B cell (primary cell): ENCODE measurements at regions of chr6 and their contacts with region 1.

Region 1: DNA sequence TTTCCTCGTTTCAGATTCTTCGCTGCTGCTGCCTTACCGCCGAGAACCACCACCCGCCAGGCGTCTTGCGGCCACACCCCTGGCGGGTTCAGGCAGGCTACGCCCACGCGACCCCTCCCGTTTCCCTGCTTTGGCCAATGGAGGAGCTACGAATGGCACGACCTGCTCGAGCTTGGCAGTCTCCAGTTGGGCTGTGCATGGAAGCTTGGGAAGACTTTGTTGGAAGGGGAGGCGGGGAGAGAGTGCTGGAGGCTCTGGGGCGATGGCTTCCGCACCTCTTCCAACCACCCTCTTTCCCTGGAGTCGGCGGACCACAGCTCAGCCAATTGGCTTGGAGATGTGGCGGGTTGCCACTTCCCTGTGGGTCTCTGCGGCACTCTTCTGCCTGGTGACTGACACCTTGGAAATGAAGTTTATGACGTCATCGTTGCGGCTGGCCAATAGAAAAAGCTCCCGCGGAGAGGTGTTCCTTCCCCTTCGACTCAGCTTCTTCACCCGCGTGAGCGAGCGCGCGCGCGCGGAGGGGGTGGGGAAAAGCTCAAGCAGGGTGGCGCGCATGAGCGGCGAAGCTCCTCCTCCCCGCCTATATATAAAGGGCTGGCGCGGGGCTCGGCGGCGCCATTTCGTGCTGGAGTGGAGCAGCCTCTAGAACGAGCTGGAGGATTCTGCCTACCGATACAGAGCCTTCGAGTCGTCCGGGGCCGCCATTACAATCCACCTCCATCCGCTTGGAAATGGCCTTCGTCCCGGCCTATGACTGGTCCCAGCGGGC is 3.4 kb downstream of the BRD2 start:
- DNase-seq: peak; percentile 100
- ATAC-seq: peak; percentile 50
- H3K4me3 ChIP-seq: peak overlapping the region; percentile 88 to 100 (median 96)
- H3K4me3 Mint-ChIP-seq: peak overlapping the region; percentile 96
- H3K27ac ChIP-seq: peak overlapping the region; percentile 96
- H3K27ac Mint-ChIP-seq: peak overlapping the region; percentile 99
- H3K4me1 ChIP-seq: peaks cover 32 to 43% of the 10 kb centered on the region in 2 donors
- H3K4me1 Mint-ChIP-seq: peaks cover 40% of the 10 kb centered on the region
- H3K27me3 ChIP-seq: no peaks in the 10 kb centered on the region
- H3K27me3 Mint-ChIP-seq: no peaks in the 10 kb centered on the region
- CTCF ChIP-seq: no peak

Region 2: GRCh38 chr6:32177788-32178546 is 793.8 kb before region 1 on chr6 and contains the start of gene RNF5:
- CTCF ChIA-PET with region 1: no interaction called
- POLR2A ChIA-PET with region 1: interaction called, 4 read pairs
- intact Hi-C with region 1: loop called (anchors 5 kb)
- DNase-seq: peak; percentile 99
- ATAC-seq: peak; percentile 79
- H3K4me3 ChIP-seq: peak within 1 kb of the TSS; percentile 68 to 92 (median 75)
- H3K4me3 Mint-ChIP-seq: peak within 1 kb of the TSS; percentile 97
- H3K27ac ChIP-seq: peak within 1 kb of the TSS; percentile 97 to 98
- H3K27ac Mint-ChIP-seq: peak within 1 kb of the TSS; percentile 99
- H3K4me1 ChIP-seq: peaks cover 34 to 47% of the 10 kb centered on the region in 2 donors
- H3K4me1 Mint-ChIP-seq: peaks cover 68% of the 10 kb centered on the region
- H3K27me3 ChIP-seq: no peaks in the 10 kb centered on the region
- H3K27me3 Mint-ChIP-seq: no peaks in the 10 kb centered on the region
- CTCF ChIP-seq: no peak
- total RNA-seq, gene RNF5: 39.0 and 40.7 TPM in 2 replicates

Region 3: GRCh38 chr6:32838114-32838958 is 133.4 kb before region 1 on chr6 and contains the start of gene TAP2:
- CTCF ChIA-PET with region 1: interaction called, 22 read pairs
- POLR2A ChIA-PET with region 1: interaction called, 36 read pairs
- intact Hi-C with region 1: no loop called
- DNase-seq: peak; percentile 97
- ATAC-seq: peak; percentile 84
- H3K4me3 ChIP-seq: peak within 1 kb of the TSS; percentile 71 to 80 (median 76)
- H3K4me3 Mint-ChIP-seq: peak within 1 kb of the TSS; percentile 97
- H3K27ac ChIP-seq: peak within 1 kb of the TSS; percentile 83 to 97
- H3K27ac Mint-ChIP-seq: peak within 1 kb of the TSS; percentile 99
- H3K4me1 ChIP-seq: peaks cover 59 to 73% of the 10 kb centered on the region in 2 donors
- H3K4me1 Mint-ChIP-seq: peaks cover 92% of the 10 kb centered on the region
- H3K27me3 ChIP-seq: no peaks in the 10 kb centered on the region
- H3K27me3 Mint-ChIP-seq: no peaks in the 10 kb centered on the region
- CTCF ChIP-seq: peak; percentile 90
- total RNA-seq, gene TAP2: 126 and 135 TPM in 2 replicates

Region 4: DNA sequence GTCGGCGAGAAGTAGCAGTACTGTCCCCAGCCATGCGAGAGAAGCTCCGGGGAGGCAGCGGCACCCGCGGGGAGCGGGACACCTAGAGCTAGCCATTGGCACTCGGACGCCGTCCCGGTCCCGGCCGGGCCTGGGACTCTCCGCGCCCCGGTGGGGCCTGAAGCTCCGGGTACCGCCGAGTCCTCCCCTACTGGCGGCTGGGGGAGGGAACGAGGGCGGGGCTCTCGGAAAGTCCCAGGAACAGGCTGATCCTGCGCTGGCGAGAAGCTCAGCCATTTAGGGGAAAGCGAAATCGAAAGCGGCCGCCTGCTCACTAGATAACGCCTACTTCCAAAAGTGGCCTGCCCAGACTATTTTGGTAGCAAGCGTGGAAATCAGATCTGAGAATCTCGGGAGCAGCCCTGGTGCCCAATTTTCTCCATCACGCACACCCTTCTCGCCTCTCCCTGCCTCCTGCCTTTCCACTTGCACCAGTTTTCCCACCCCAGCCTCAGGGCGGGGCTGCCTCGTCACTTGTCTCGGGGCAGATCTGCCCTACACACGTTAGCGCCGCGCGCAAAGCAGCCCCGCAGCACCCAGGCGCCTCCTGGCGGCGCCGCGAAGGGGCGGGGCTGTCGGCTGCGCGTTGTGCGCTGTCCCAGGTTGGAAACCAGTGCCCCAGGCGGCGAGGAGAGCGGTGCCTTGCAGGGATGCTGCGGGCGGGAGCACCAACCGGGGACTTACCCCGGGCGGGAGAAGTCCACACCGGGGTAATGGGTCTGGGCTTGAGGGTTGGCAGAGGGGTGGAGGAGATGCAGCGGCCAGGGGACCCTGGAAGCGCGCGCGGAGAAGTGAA is 118.0 kb before region 1 on chr6 and contains the starts of genes PSMB9 and TAP1:
- CTCF ChIA-PET with region 1: interaction called, 7 read pairs
- POLR2A ChIA-PET with region 1: interaction called, 47 read pairs
- intact Hi-C with region 1: no loop called
- DNase-seq: peak; percentile 98
- ATAC-seq: peak; percentile 82
- H3K4me3 ChIP-seq: peak within 1 kb of the TSS; percentile 91 to 98 (median 94)
- H3K4me3 Mint-ChIP-seq: peak within 1 kb of the TSS; percentile 99
- H3K27ac ChIP-seq: peak within 1 kb of the TSS; percentile 98 to 99
- H3K27ac Mint-ChIP-seq: peak within 1 kb of the TSS; percentile 100
- H3K4me1 ChIP-seq: peaks cover 60 to 63% of the 10 kb centered on the region in 2 donors
- H3K4me1 Mint-ChIP-seq: peaks cover 75% of the 10 kb centered on the region
- H3K27me3 ChIP-seq: no peaks in the 10 kb centered on the region
- H3K27me3 Mint-ChIP-seq: no peaks in the 10 kb centered on the region
- CTCF ChIP-seq: peak; percentile 81
- total RNA-seq, gene PSMB9: 174 and 181 TPM in 2 replicates
- total RNA-seq, gene TAP1: 126 and 131 TPM in 2 replicates

Region 5: DNA sequence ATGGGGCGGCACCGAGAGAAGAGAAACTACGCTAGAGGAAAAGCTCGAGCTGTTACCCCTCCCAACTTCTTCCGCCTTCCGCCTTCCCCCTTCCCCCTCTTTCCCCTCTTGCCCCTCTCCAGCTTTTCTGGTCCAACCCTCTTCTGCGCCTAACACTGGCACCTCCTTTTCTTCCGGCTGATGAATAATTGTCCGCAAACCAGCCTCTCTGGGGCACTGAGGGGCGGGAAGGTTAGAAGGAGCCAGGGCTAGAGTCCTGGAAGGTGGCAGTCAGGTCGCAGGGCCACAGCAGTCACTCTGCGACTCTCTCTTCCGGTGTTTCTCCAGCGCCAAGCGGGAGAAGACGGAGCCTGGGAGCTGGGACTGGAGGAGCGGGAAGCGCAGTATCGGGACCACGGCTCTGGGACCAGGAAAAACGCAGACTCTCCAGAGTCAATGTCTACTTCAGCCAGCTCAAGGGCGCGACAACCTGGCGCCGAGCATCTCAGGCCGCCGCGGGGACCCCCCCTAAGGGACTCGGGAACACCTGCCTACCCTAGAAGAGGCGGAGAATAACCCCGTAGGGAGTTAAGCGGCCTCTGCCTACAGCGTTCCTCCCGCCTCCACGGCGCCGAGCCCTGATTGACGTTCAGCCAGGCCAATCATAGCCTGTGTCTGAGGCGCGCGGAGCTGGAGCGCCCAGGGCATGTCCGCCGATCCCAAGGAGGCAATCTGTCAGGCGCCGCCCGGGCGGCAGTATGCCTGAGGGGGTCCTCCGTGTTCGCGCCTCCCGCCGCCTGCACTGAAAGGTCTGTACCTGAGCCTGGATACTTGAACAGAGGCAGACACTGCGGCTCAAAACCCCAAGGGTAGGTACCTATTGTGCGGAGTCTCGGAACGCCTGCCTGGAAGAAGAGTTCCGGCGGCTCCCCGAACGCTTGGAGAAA is 77.4 kb before region 1 on chr6:
- CTCF ChIA-PET with region 1: interaction called, 15 read pairs
- POLR2A ChIA-PET with region 1: interaction called, 64 read pairs
- intact Hi-C with region 1: loop called (anchors 1 kb)
- DNase-seq: peak; percentile 98
- ATAC-seq: peak; percentile 98
- H3K4me3 ChIP-seq: peak overlapping the region; percentile 84 to 96 (median 92)
- H3K4me3 Mint-ChIP-seq: peak overlapping the region; percentile 99
- H3K27ac ChIP-seq: peak overlapping the region; percentile 89 to 90
- H3K27ac Mint-ChIP-seq: peak overlapping the region; percentile 98
- H3K4me1 ChIP-seq: peaks cover 40 to 42% of the 10 kb centered on the region in 2 donors
- H3K4me1 Mint-ChIP-seq: peaks cover 60% of the 10 kb centered on the region
- H3K27me3 ChIP-seq: no peaks in the 10 kb centered on the region
- H3K27me3 Mint-ChIP-seq: no peaks in the 10 kb centered on the region
- CTCF ChIP-seq: no peak

Region 6: GRCh38 chr6:32947552-32948465 is 24.0 kb before region 1 on chr6:
- CTCF ChIA-PET with region 1: interaction called, 822 read pairs
- POLR2A ChIA-PET with region 1: interaction called, 349 read pairs
- intact Hi-C with region 1: loop called (anchors 1 kb)
- DNase-seq: peak; percentile 76
- ATAC-seq: no peak
- H3K4me3 ChIP-seq: peak overlapping the region in 3 of 5 experiments; percentile 2 to 35 (median 6)
- H3K4me3 Mint-ChIP-seq: peak overlapping the region; percentile 84
- H3K27ac ChIP-seq: peak overlapping the region; percentile 97 to 98
- H3K27ac Mint-ChIP-seq: peak overlapping the region; percentile 92
- H3K4me1 ChIP-seq: peaks cover 80 to 94% of the 10 kb centered on the region in 2 donors
- H3K4me1 Mint-ChIP-seq: peaks cover 86% of the 10 kb centered on the region
- H3K27me3 ChIP-seq: no peaks in the 10 kb centered on the region
- H3K27me3 Mint-ChIP-seq: no peaks in the 10 kb centered on the region
- CTCF ChIP-seq: peak; percentile 70

Region 7: DNA sequence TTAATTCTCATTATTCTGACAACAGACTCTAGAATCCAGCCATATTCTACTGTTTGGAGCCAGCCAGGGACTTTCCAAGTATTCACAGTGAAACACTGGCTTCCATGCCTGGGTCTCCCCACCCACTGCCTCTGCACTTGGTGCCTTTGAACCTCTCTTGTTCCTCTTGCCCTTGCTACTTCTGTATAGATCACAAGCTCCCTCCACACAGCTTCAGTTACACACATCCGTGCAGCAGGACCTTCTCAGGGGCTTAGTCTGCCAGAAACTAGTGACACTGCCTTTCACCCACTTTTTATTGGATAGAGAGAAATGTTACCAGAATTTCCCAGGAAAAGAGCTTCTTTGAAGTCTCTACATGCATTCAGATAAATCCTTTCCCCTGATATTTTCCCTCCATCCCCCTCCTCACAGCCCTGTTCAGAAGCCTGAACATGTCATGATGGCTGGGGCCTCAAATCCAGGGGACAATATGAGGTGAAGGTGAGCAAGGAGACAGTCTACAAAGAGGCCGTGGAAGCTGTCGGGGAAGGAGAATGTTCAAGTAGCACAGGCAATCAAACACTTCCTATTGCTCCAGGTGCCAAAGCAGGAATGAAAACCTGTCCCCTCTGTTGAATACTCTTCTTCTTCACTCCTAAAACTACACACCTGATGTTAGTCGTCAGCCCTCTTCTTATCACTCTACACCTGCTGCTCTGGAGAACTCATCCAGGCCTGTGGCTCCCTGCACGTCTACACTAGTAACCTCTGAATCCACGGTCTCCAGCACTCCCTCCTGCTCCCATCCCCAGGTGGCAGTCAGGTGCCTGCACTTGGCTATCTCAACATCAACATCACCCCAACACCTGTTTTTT is 57.8 kb after region 1 on chr6:
- CTCF ChIA-PET with region 1: no interaction called
- POLR2A ChIA-PET with region 1: interaction called, 6 read pairs
- intact Hi-C with region 1: loop called (anchors 5 kb)
- DNase-seq: peak; percentile 96
- ATAC-seq: peak; percentile 75
- H3K4me3 ChIP-seq: peak overlapping the region in 4 of 5 experiments; percentile 25 to 51 (median 33)
- H3K4me3 Mint-ChIP-seq: peak overlapping the region; percentile 71
- H3K27ac ChIP-seq: peak overlapping the region; percentile 99
- H3K27ac Mint-ChIP-seq: peak overlapping the region; percentile 99
- H3K4me1 ChIP-seq: peaks cover 45 to 54% of the 10 kb centered on the region in 2 donors
- H3K4me1 Mint-ChIP-seq: peaks cover 63% of the 10 kb centered on the region
- H3K27me3 ChIP-seq: no peaks in the 10 kb centered on the region
- H3K27me3 Mint-ChIP-seq: no peaks in the 10 kb centered on the region
- CTCF ChIP-seq: no peak

Region 8: GRCh38 chr6:33061987-33062386 is 90.2 kb after region 1 on chr6:
- CTCF ChIA-PET with region 1: no interaction called
- POLR2A ChIA-PET with region 1: no interaction called
- intact Hi-C with region 1: no loop called
- DNase-seq: peak; percentile 85
- ATAC-seq: peak; percentile 70
- H3K4me3 ChIP-seq: peak overlapping the region in 1 of 5 experiments; percentile 6
- H3K4me3 Mint-ChIP-seq: peak overlapping the region; percentile 1
- H3K27ac ChIP-seq: peak overlapping the region in 1 of 2 donors; percentile 70
- H3K27ac Mint-ChIP-seq: peak overlapping the region; percentile 93
- H3K4me1 ChIP-seq: peaks cover 32 to 34% of the 10 kb centered on the region in 2 donors
- H3K4me1 Mint-ChIP-seq: peaks cover 44% of the 10 kb centered on the region
- H3K27me3 ChIP-seq: no peaks in the 10 kb centered on the region
- H3K27me3 Mint-ChIP-seq: no peaks in the 10 kb centered on the region
- CTCF ChIP-seq: no peak